B cell (primary cell): ENCODE measurements at regions of chr12 and their contacts with region 1.

Region 1: GRCh38 chr12:57111031-57111734 is at the start of gene STAT6:
- DNase-seq: peak; percentile 92
- ATAC-seq: peak; percentile 60
- H3K4me3 ChIP-seq: peak within 1 kb of the TSS; percentile 87 to 100 (median 100)
- H3K4me3 Mint-ChIP-seq: peak within 1 kb of the TSS; percentile 99
- H3K27ac ChIP-seq: peak within 1 kb of the TSS; percentile 96 to 100
- H3K27ac Mint-ChIP-seq: peak within 1 kb of the TSS; percentile 98
- H3K4me1 ChIP-seq: peaks cover 20 to 40% of the 10 kb centered on the region in 2 donors
- H3K4me1 Mint-ChIP-seq: peaks cover 43% of the 10 kb centered on the region
- H3K27me3 ChIP-seq: no peaks in the 10 kb centered on the region
- H3K27me3 Mint-ChIP-seq: no peaks in the 10 kb centered on the region
- CTCF ChIP-seq: no peak
- total RNA-seq, gene STAT6: 704 and 736 TPM in 2 replicates

Region 2: GRCh38 chr12:56346703-56347102 is 764.5 kb before region 1 on chr12:
- CTCF ChIA-PET with region 1: no interaction called
- POLR2A ChIA-PET with region 1: no interaction called
- intact Hi-C with region 1: no loop called
- DNase-seq: no peak
- ATAC-seq: no peak
- H3K4me3 ChIP-seq: no peak overlapping the region
- H3K4me3 Mint-ChIP-seq: no peak overlapping the region
- H3K27ac ChIP-seq: no peak overlapping the region
- H3K27ac Mint-ChIP-seq: no peak overlapping the region
- H3K4me1 ChIP-seq: no peaks in the 10 kb centered on the region
- H3K4me1 Mint-ChIP-seq: no peaks in the 10 kb centered on the region
- H3K27me3 ChIP-seq: no peaks in the 10 kb centered on the region
- H3K27me3 Mint-ChIP-seq: no peaks in the 10 kb centered on the region
- CTCF ChIP-seq: no peak

Region 3: GRCh38 chr12:56645717-56646446 is 465.3 kb before region 1 on chr12 and contains the start of gene ATP5F1B:
- CTCF ChIA-PET with region 1: no interaction called
- POLR2A ChIA-PET with region 1: interaction called, 10 read pairs
- intact Hi-C with region 1: no loop called
- DNase-seq: peak; percentile 97
- ATAC-seq: peak; percentile 97
- H3K4me3 ChIP-seq: peak within 1 kb of the TSS; percentile 86 to 100 (median 94)
- H3K4me3 Mint-ChIP-seq: peak within 1 kb of the TSS; percentile 79
- H3K27ac ChIP-seq: peak within 1 kb of the TSS; percentile 85 to 91
- H3K27ac Mint-ChIP-seq: peak within 1 kb of the TSS; percentile 97
- H3K4me1 ChIP-seq: peaks cover 21 to 22% of the 10 kb centered on the region in 2 donors
- H3K4me1 Mint-ChIP-seq: peaks cover 29% of the 10 kb centered on the region
- H3K27me3 ChIP-seq: no peaks in the 10 kb centered on the region
- H3K27me3 Mint-ChIP-seq: no peaks in the 10 kb centered on the region
- CTCF ChIP-seq: no peak
- total RNA-seq, gene ATP5F1B: 217 and 230 TPM in 2 replicates

Region 4: GRCh38 chr12:56766535-56766934 is 344.6 kb before region 1 on chr12:
- CTCF ChIA-PET with region 1: interaction called, 14 read pairs
- POLR2A ChIA-PET with region 1: no interaction called
- intact Hi-C with region 1: no loop called
- DNase-seq: peak; percentile 78
- ATAC-seq: peak; percentile 99
- H3K4me3 ChIP-seq: no peak overlapping the region
- H3K4me3 Mint-ChIP-seq: peak overlapping the region; percentile 14
- H3K27ac ChIP-seq: no peak overlapping the region
- H3K27ac Mint-ChIP-seq: peak overlapping the region; percentile 23
- H3K4me1 ChIP-seq: peaks cover 11 to 15% of the 10 kb centered on the region in 2 donors
- H3K4me1 Mint-ChIP-seq: peaks cover 12% of the 10 kb centered on the region
- H3K27me3 ChIP-seq: no peaks in the 10 kb centered on the region
- H3K27me3 Mint-ChIP-seq: no peaks in the 10 kb centered on the region
- CTCF ChIP-seq: no peak

Region 5: DNA sequence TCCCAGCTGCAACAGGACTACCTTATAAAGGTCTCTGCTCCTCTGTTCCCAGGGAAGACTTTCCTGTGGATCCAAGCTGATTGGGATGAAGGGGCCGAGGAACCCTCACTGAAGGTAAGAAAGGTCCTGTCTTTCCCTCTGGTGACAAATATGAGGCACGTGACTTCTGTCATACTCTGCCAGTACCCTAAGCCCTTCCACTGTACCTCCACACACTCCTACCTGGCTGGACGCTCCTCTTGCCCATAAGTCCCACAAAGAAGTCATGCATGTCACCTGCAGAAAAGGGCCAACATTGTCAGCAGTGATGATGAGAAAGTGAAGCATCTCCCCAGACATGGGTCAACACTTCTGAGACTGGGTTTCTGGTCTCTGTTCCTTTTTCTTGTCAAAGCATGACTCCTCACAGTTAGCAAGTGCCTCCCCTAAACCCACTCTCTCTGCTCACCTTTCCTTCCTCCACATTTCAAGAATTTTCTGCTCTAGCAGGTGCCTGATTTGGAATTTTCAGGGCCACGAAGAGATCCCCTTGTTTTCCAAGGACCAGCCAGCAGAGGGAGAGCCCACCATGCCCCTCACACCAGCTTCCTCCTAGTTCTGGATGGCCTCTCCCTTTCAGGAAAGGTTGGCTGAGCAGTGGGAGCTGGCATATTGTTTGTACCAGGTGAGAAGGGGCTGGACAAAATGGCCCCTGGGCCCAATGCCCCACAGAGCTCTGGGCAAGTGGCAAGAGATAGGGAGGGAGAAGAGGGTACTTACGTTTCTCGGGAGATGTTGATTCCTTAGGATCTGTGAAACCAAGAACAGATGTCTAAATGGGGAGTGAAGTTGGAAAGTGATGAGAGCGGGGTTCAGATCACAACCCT is 98.3 kb before region 1 on chr12:
- CTCF ChIA-PET with region 1: interaction called, 27 read pairs
- POLR2A ChIA-PET with region 1: interaction called, 5 read pairs
- intact Hi-C with region 1: loop called (anchors 1 kb)
- DNase-seq: no peak
- ATAC-seq: no peak
- H3K4me3 ChIP-seq: no peak overlapping the region
- H3K4me3 Mint-ChIP-seq: no peak overlapping the region
- H3K27ac ChIP-seq: no peak overlapping the region
- H3K27ac Mint-ChIP-seq: no peak overlapping the region
- H3K4me1 ChIP-seq: peaks cover 5 to 18% of the 10 kb centered on the region in 2 donors
- H3K4me1 Mint-ChIP-seq: peaks cover 16% of the 10 kb centered on the region
- H3K27me3 ChIP-seq: peaks cover 0 to 3% (median 1%) of the 10 kb centered on the region in 4 experiments
- H3K27me3 Mint-ChIP-seq: peaks cover 18% of the 10 kb centered on the region
- CTCF ChIP-seq: no peak

Region 6: GRCh38 chr12:57063991-57064685 is 47.0 kb before region 1 on chr12:
- CTCF ChIA-PET with region 1: interaction called, 420 read pairs
- POLR2A ChIA-PET with region 1: interaction called, 68 read pairs
- intact Hi-C with region 1: loop called (anchors 1 kb)
- DNase-seq: peak; percentile 84
- ATAC-seq: peak; percentile 85
- H3K4me3 ChIP-seq: peak overlapping the region in 2 of 5 experiments; percentile 3 to 53
- H3K4me3 Mint-ChIP-seq: peak overlapping the region; percentile 57
- H3K27ac ChIP-seq: peak overlapping the region; percentile 61 to 87
- H3K27ac Mint-ChIP-seq: peak overlapping the region; percentile 46
- H3K4me1 ChIP-seq: peaks cover 14 to 25% of the 10 kb centered on the region in 2 donors
- H3K4me1 Mint-ChIP-seq: peaks cover 38% of the 10 kb centered on the region
- H3K27me3 ChIP-seq: no peaks in the 10 kb centered on the region
- H3K27me3 Mint-ChIP-seq: no peaks in the 10 kb centered on the region
- CTCF ChIP-seq: no peak

Region 7: GRCh38 chr12:57088459-57089248 is 22.5 kb before region 1 on chr12 and contains the start of gene NAB2:
- CTCF ChIA-PET with region 1: interaction called, 420 read pairs
- POLR2A ChIA-PET with region 1: interaction called, 139 read pairs
- intact Hi-C with region 1: loop called (anchors 1 kb)
- DNase-seq: peak; percentile 96
- ATAC-seq: peak; percentile 62
- H3K4me3 ChIP-seq: peak within 1 kb of the TSS; percentile 75 to 100 (median 80)
- H3K4me3 Mint-ChIP-seq: peak within 1 kb of the TSS; percentile 92
- H3K27ac ChIP-seq: peak within 1 kb of the TSS; percentile 98 to 99
- H3K27ac Mint-ChIP-seq: peak within 1 kb of the TSS; percentile 91
- H3K4me1 ChIP-seq: peaks cover 18 to 40% of the 10 kb centered on the region in 2 donors
- H3K4me1 Mint-ChIP-seq: peaks cover 55% of the 10 kb centered on the region
- H3K27me3 ChIP-seq: no peaks in the 10 kb centered on the region
- H3K27me3 Mint-ChIP-seq: no peaks in the 10 kb centered on the region
- CTCF ChIP-seq: no peak
- total RNA-seq, gene NAB2: 49.0 and 52.1 TPM in 2 replicates

Region 8: DNA sequence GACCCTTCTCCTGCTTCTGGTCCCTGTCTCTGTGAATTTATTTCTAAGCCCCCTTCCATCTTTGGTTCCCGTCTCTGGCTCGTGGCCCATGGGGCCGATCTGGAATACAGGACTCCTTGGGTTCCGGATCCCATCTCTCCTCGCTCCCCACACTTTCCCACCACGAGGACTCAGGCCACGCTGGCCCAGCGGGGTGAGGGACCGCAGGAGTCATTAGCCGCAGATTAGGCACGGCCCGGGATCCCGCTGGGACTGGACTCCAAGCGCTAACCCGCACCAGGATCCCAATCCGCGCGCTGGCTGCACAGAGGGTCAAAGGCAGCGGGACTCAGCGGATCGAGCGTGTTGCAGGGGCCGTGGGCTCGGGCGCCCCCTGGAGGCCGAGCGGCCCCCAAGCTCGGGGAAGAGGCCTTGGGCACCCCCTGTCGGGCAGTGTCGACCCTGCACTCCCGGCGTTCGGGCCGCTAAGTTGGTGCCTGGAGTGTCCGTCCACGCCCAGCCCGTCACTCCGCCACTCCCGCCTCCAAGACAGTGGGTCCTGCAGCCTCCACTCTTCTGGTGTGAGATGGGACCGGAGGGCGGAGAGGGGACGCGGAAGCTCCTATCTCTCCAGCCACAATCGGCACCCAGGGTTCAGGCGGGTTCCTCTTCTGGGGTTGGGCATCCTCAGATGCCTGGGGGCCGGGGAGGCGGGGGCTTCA is 127.8 kb after region 1 on chr12:
- CTCF ChIA-PET with region 1: interaction called, 13 read pairs
- POLR2A ChIA-PET with region 1: no interaction called
- intact Hi-C with region 1: loop called (anchors 5 kb)
- DNase-seq: peak; percentile 93
- ATAC-seq: peak; percentile 46
- H3K4me3 ChIP-seq: peak overlapping the region; percentile 19 to 79 (median 75)
- H3K4me3 Mint-ChIP-seq: peak overlapping the region; percentile 89
- H3K27ac ChIP-seq: no peak overlapping the region
- H3K27ac Mint-ChIP-seq: peak overlapping the region; percentile 92
- H3K4me1 ChIP-seq: peaks cover 92 to 99% of the 10 kb centered on the region in 2 donors
- H3K4me1 Mint-ChIP-seq: peaks cover 92% of the 10 kb centered on the region
- H3K27me3 ChIP-seq: peaks cover 0 to 70% (median 30%) of the 10 kb centered on the region in 4 experiments
- H3K27me3 Mint-ChIP-seq: peaks cover 12% of the 10 kb centered on the region
- CTCF ChIP-seq: peak; percentile 100